Activated naive CD4-positive, alpha-beta T cell treated with anti-CD3 and anti-CD28 coated beads for 36 hours (primary cell): ENCODE measurements at regions of chr14 and their contacts with region 1.

Region 1: GRCh38 chr14:22168092-22168955 is 420.7 kb downstream of the DAD1 start:
- DNase-seq: peak; percentile 33
- H3K4me3 Mint-ChIP-seq: peak overlapping the region; percentile 72
- H3K27ac Mint-ChIP-seq: peak overlapping the region; percentile 84
- H3K4me1 Mint-ChIP-seq: peaks cover 9% of the 10 kb centered on the region
- H3K27me3 Mint-ChIP-seq: no peaks in the 10 kb centered on the region

Region 2: GRCh38 chr14:22200977-22201605 is 32.8 kb after region 1 on chr14:
- CTCF ChIA-PET with region 1: no interaction called
- intact Hi-C with region 1: loop called (anchors 1 kb)
- DNase-seq: no peak
- H3K4me3 Mint-ChIP-seq: no peak overlapping the region
- H3K27ac Mint-ChIP-seq: no peak overlapping the region
- H3K4me1 Mint-ChIP-seq: peaks cover 3% of the 10 kb centered on the region
- H3K27me3 Mint-ChIP-seq: no peaks in the 10 kb centered on the region

Region 3: GRCh38 chr14:22221508-22221907 is 53.2 kb after region 1 on chr14:
- CTCF ChIA-PET with region 1: interaction called, 3 read pairs
- intact Hi-C with region 1: loop called (anchors 5 kb)
- DNase-seq: no peak
- H3K4me3 Mint-ChIP-seq: peak overlapping the region; percentile 69
- H3K27ac Mint-ChIP-seq: peak overlapping the region; percentile 72
- H3K4me1 Mint-ChIP-seq: peaks cover 7% of the 10 kb centered on the region
- H3K27me3 Mint-ChIP-seq: no peaks in the 10 kb centered on the region